ENCODE measurements at regions of chr17 and their contacts with region 1.

Region 1: DNA sequence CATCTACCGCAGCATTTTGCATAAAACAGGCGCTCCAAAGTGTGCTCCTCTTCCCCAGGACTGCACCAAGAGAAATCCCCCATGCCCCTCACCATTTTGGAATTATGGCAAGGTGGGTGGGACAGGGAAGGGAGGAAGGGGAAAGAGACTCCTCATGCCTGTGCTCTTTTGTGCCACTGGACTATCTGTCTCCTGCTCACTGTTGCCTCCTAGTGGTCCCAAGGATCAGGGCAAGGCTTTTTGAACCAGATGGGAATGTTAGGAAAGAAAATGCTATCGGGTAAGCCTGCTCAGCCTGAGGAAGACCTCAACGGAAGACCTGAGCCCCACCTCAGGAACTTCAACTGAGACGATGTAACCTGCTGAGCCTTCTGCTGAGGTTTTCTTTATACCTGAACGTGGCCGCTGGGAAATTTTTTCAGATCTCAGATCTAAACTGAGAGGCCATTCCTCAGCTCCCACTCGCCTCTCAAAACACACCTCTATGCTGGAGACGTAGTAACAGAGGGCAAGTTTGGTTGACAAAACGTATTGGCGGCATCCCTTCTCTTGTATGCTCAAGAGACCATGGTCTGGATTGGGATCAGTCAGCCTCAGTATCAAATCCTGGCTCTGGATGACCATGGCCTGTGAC is 58.3 kb downstream of the SPACA3 start:
- DNase-seq: peak; percentile 59 to 76
- ATAC-seq: peak; percentile 55 to 90; a peak in 3 of 6 replicates
- H3K4me3 ChIP-seq: no peak overlapping the region
- H3K27ac ChIP-seq: peak overlapping the region in 1 of 2 experiments; percentile 27; a peak in 1 of 6 replicates
- H3K4me1 ChIP-seq: peaks cover 19% of the 10 kb centered on the region
- CTCF ChIP-seq: peak; percentile 83
- EP300 ChIP-seq: no peak
- POLR2A ChIP-seq: no peak
- RAD21 ChIP-seq: peak; percentile 60 to 75

Region 2: GRCh38 chr17:33038740-33039139 is 11.2 kb before region 1 on chr17:
- CTCF ChIA-PET with region 1: interaction called, 18 read pairs
- POLR2A ChIA-PET with region 1: no interaction called
- DNase-seq: peak; percentile 57 to 65
- ATAC-seq: peak; percentile 62 to 90; a peak in 5 of 6 replicates
- H3K4me3 ChIP-seq: no peak overlapping the region
- H3K27ac ChIP-seq: peak overlapping the region in 1 of 2 experiments; percentile 42; a peak in 3 of 6 replicates
- H3K4me1 ChIP-seq: peaks cover 14% of the 10 kb centered on the region
- CTCF ChIP-seq: peak; percentile 54
- EP300 ChIP-seq: no peak
- POLR2A ChIP-seq: no peak
- RAD21 ChIP-seq: peak; percentile 59 to 69

Region 3: DNA sequence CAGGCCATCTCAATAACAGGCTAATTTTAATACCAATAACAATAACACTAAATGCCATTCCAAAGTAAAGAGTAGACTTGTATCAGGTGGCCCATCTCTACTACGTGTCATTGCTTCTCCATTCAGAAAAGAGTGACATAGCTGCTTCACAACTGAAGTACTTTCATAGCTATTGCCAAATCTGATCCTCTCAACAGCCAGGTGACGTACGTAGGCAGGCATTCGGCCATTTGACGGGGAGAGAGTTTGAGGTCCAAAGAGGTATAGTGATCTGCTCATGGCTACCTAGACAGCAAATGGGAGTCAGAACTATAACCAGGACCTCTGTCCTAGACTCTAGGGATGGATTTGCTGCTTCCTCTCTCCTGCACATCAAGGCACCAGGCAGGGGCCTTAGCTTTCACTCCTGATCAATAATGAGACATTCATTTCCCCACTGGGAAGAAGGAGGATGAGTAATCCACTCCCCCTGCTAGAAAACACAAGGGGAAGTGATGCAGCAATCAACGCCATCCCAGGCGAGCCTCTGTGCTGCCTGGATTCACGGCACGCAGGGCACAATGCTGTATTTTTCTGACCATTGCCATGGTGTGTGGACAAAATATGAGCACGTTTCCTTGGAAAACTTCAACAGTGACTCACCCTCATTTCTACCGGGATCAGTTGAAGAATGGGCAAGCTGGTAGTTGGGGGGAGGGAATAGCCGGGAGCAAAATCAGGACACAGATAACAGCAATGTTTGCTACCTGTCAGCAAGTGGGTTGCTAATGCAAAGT is 22.7 kb after region 1 on chr17:
- CTCF ChIA-PET with region 1: interaction called, 14 read pairs
- POLR2A ChIA-PET with region 1: no interaction called
- DNase-seq: peak in 1 of 2 experiments; percentile 50
- ATAC-seq: peak; percentile 57 to 68; a peak in 5 of 6 replicates
- H3K4me3 ChIP-seq: no peak overlapping the region
- H3K27ac ChIP-seq: no peak overlapping the region
- H3K4me1 ChIP-seq: peaks cover 6% of the 10 kb centered on the region; the same call in 1 of the 3 replicates
- CTCF ChIP-seq: no peak
- EP300 ChIP-seq: no peak
- POLR2A ChIP-seq: no peak
- RAD21 ChIP-seq: no peak